Natural killer cell (primary cell): ENCODE measurements at regions of chr3 and their contacts with region 1.

Region 1: DNA sequence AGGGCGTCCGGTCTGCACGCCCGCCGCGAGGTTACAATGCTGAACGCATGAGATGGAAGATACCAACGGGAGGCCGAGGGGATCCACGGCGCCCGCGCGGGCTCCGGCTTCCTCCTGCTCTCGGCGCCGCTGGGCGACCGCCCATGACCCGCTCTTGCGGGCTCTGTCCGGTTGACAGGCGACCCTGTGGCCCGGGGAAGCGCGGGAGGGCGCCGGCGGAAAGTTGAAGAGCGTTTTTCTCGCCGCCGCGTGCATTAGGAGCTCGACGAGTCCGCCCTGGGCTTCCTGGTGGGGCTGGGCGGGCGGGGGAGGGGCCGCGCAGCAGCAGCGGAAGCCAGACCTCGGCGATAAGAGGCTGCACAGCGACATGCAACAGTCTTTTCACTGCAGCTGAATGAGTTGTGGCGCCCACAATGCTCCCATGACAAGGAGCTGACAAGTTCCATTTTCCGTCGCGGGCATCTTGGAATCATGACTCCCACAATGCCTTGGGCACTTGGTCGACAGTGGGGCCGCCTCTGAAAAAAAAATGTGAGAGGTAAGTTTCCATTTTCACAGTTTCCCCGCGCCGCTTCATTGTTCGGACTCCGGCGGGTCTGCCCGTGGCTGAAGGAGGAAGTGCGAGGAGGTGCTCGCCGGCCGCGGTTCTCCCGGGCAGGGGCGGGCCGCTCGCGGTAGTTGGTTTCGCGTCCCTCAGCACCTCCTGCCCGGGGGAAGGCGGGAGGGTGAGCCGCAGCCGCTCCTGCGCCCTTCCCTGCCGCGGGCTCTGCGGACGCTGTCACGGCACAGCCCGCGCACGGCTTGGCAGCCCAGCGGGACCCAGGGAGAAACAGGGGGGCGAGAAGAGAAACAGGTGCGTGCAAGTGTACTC is at the start of gene MBNL1:
- DNase-seq: peak; percentile 82 to 94
- ATAC-seq: peak; percentile 61 to 85 (median 75)
- H3K4me3 ChIP-seq: peak within 1 kb of the TSS; percentile 93
- H3K4me3 Mint-ChIP-seq: peak within 1 kb of the TSS; percentile 97
- H3K27ac ChIP-seq: peak within 1 kb of the TSS; percentile 93
- H3K27ac Mint-ChIP-seq: peak within 1 kb of the TSS; percentile 81 to 84
- H3K4me1 ChIP-seq: peaks cover 22% of the 10 kb centered on the region
- H3K4me1 Mint-ChIP-seq: peaks cover 62 to 77% of the 10 kb centered on the region in 2 donors
- H3K27me3 ChIP-seq: no peaks in the 10 kb centered on the region
- H3K27me3 Mint-ChIP-seq: no peaks in the 10 kb centered on the region
- CTCF ChIP-seq: no peak
- total RNA-seq, gene MBNL1: 600 to 704 (median 607) TPM

Region 2: GRCh38 chr3:152199102-152199840 is 69.5 kb before region 1 on chr3:
- intact Hi-C with region 1: loop called (anchors 2 kb)
- DNase-seq: peak in 1 of 2 donors; percentile 65
- ATAC-seq: peak; percentile 47 to 56 (median 56)
- H3K4me3 ChIP-seq: peak overlapping the region; percentile 21
- H3K4me3 Mint-ChIP-seq: peak overlapping the region; percentile 97
- H3K27ac ChIP-seq: peak overlapping the region; percentile 90
- H3K27ac Mint-ChIP-seq: peak overlapping the region; percentile 94 to 96
- H3K4me1 ChIP-seq: peaks cover 14% of the 10 kb centered on the region
- H3K4me1 Mint-ChIP-seq: peaks cover 71 to 78% of the 10 kb centered on the region in 2 donors
- H3K27me3 ChIP-seq: no peaks in the 10 kb centered on the region
- H3K27me3 Mint-ChIP-seq: no peaks in the 10 kb centered on the region
- CTCF ChIP-seq: no peak

Region 3: GRCh38 chr3:152258448-152259393 is 10.1 kb before region 1 on chr3:
- intact Hi-C with region 1: loop called (anchors 1 kb)
- DNase-seq: peak; percentile 62 to 78
- ATAC-seq: peak; percentile 62 to 81 (median 79)
- H3K4me3 ChIP-seq: no peak overlapping the region
- H3K4me3 Mint-ChIP-seq: peak overlapping the region; percentile 73
- H3K27ac ChIP-seq: peak overlapping the region; percentile 94
- H3K27ac Mint-ChIP-seq: peak overlapping the region; percentile 79 to 96
- H3K4me1 ChIP-seq: peaks cover 43% of the 10 kb centered on the region
- H3K4me1 Mint-ChIP-seq: peaks cover 83 to 84% of the 10 kb centered on the region in 2 donors
- H3K27me3 ChIP-seq: no peaks in the 10 kb centered on the region
- H3K27me3 Mint-ChIP-seq: no peaks in the 10 kb centered on the region
- CTCF ChIP-seq: no peak

Region 4: DNA sequence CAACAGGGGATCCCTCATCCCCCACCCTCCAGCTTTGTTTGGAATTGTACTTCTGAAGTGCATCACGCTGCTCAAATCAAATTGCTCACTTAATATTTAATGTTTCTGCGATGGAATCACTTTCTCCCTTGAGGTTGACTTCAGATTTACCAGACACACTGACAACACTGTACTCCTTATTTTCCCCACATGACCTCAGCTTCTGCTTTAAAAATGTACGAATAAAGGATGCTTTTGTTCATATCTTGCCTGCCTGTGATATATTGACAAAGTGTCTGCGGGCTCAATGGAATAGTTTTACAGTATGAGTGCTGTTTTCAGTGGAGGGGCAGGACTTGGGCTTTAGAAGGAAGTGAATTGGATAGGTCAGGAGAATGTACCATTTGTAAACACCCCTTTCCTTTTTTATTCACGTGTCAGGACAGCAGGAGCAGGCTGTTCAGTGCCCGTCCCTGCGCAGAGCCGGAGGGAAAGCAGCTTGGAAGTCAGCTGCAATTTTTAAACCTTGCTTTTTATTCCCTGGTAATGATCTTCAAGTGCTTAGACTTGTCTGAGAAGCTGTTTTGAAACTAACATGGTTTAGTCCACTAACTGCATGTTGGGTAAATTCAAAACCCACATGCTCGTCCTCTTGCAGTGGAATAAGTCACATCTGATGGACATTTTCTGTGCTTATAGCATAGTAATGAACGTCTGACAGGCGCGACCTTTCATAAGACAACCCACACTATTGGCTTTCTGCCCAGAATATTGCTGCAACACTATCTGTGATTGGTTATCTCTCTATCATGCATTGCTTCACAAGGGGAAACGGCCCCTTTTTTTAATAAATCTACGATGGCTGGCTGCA is 29.8 kb after region 1 on chr3:
- intact Hi-C with region 1: loop called (anchors 2 kb)
- DNase-seq: peak; percentile 35 to 90
- ATAC-seq: peak; percentile 71 to 86 (median 78)
- H3K4me3 ChIP-seq: no peak overlapping the region
- H3K4me3 Mint-ChIP-seq: peak overlapping the region; percentile 71
- H3K27ac ChIP-seq: peak overlapping the region; percentile 60
- H3K27ac Mint-ChIP-seq: peak overlapping the region; percentile 76 to 89
- H3K4me1 ChIP-seq: peaks cover 42% of the 10 kb centered on the region
- H3K4me1 Mint-ChIP-seq: peaks cover 57 to 76% of the 10 kb centered on the region in 2 donors
- H3K27me3 ChIP-seq: no peaks in the 10 kb centered on the region
- H3K27me3 Mint-ChIP-seq: no peaks in the 10 kb centered on the region
- CTCF ChIP-seq: no peak

Region 5: GRCh38 chr3:153192327-153192726 is 923.5 kb after region 1 on chr3:
- intact Hi-C with region 1: no loop called
- DNase-seq: no peak
- ATAC-seq: no peak
- H3K4me3 ChIP-seq: no peak overlapping the region
- H3K4me3 Mint-ChIP-seq: no peak overlapping the region
- H3K27ac ChIP-seq: no peak overlapping the region
- H3K27ac Mint-ChIP-seq: no peak overlapping the region
- H3K4me1 ChIP-seq: no peaks in the 10 kb centered on the region
- H3K4me1 Mint-ChIP-seq: peaks cover 0 to 4% of the 10 kb centered on the region in 2 donors
- H3K27me3 ChIP-seq: no peaks in the 10 kb centered on the region
- H3K27me3 Mint-ChIP-seq: no peaks in the 10 kb centered on the region
- CTCF ChIP-seq: no peak